Lower leg skin (tissue), 4 donors: ENCODE measurements at regions of chr5 and their contacts with region 1.

Region 1: GRCh38 chr5:13359326-13359725 is 585.2 kb downstream of the DNAH5 start:
- DNase-seq: no peak
- H3K4me3 ChIP-seq: no peak overlapping the region
- CTCF ChIP-seq: no peak
- POLR2A ChIP-seq: no peak

Region 2: GRCh38 chr5:13771011-13771571 is 411.8 kb after region 1 on chr5:
- intact Hi-C with region 1: no loop called
- DNase-seq: no peak
- H3K4me3 ChIP-seq: no peak overlapping the region
- CTCF ChIP-seq: no peak
- POLR2A ChIP-seq: no peak

Region 3: DNA sequence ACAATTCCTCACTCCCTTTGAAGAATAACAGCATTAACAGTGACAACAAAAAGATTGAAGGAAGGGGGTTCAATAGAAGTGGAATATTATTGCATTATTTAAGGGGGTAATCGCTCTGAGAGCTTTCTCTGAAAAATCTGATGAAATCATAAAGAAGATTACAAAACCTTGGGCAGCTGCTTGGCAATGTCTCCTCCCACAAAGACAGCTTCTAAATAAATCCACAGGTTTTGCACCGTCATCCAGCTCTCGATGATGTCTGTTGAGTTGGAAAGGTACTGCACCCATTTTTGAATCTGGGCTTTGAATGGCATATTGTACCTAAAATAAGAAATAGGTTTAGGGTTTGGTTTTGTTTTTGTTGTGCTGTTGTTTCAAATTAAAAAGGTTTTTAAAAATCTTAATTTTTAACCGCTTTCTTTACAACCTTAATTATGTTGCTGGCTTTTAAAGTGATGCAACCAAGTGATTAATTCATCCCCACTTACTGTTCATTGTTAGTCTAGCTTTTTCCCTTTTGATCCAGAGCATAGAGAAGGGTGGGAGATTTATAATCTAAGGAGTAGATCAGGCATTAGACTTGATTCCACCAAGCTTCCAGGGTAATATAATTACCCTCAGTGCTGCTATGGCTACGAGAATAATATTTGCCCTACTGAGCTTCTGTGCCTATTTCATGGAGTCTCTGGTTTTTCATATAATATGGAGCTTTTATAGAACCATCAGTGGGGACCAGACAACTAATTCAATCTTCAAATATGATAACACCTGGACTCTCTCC is 500.1 kb after region 1 on chr5:
- intact Hi-C with region 1: loop called (anchors 5 kb)
- DNase-seq: no peak
- H3K4me3 ChIP-seq: no peak overlapping the region
- CTCF ChIP-seq: no peak
- POLR2A ChIP-seq: no peak